ENCODE measurements at regions of chr11 and their contacts with region 1.

Region 1: GRCh38 chr11:44095506-44096394 is at the start of gene EXT2:
- DNase-seq: peak; percentile 49
- ATAC-seq: peak; percentile 95
- H3K4me3 ChIP-seq: peak within 1 kb of the TSS; percentile 81 to 89
- H3K27ac ChIP-seq: peak within 1 kb of the TSS; percentile 64
- H3K4me1 ChIP-seq: peaks cover 3 to 19% of the 10 kb centered on the region in 2 experiments; a peak in 2 of 4 replicates
- H3K27me3 ChIP-seq: no peaks in the 10 kb centered on the region
- CTCF ChIP-seq: peak; percentile 49 to 83 (median 77); a peak in 5 of 6 replicates
- POLR2A ChIP-seq: peak; percentile 24
- RAD21 ChIP-seq: no peak
- total RNA-seq, gene EXT2: 42.8 TPM

Region 2: DNA sequence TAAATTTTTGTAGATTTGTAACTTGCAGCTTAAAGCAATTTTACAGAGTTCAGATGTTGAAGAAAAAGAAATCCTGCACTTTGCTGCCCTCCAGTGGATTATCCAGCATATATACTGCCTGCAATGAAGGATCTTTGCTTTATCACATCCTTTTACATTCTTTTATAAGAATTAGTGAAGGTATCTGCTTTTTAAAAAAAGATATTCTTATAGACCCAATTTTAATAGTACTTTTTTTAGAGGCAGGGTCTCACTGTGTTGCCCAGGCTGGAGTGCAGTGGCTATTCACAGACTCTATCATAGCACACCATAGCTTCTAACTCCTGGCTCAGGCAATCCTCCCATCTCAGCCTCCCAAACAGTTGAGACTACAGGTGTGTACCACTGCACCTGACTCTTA is 676.3 kb before region 1 on chr11:
- CTCF ChIA-PET with region 1: no interaction called
- POLR2A ChIA-PET with region 1: no interaction called
- RAD21 ChIA-PET with region 1: no interaction called
- intact Hi-C with region 1: no loop called
- DNase-seq: peak; percentile 2
- ATAC-seq: peak; percentile 72; the same call in 1 of the 2 replicates
- H3K4me3 ChIP-seq: no peak overlapping the region
- H3K27ac ChIP-seq: no peak overlapping the region
- H3K4me1 ChIP-seq: no peaks in the 10 kb centered on the region
- H3K27me3 ChIP-seq: no peaks in the 10 kb centered on the region
- CTCF ChIP-seq: peak; percentile 10 to 77 (median 64); a peak in 4 of 6 replicates
- POLR2A ChIP-seq: no peak
- RAD21 ChIP-seq: peak; percentile 48

Region 3: DNA sequence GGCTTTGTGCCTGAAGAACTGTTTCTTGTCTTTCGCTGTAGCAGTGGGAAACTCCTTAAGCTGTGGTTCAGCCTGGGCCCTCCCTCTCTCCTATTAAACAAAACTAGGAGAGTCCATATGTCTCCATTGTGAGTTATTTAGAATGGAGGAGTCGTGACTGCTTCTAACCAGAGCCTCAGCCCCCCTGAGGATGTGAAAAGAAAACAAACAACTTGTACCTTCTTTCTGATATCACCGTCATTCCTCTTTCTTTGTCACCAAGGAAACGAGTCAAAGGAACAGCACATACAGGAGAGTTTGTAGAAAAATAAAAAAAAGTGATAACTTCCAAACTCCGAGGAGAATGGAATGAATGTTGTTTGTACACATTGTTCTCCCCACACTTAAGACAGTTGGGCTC is 11.8 kb before region 1 on chr11:
- CTCF ChIA-PET with region 1: interaction called, 17 read pairs
- POLR2A ChIA-PET with region 1: no interaction called
- RAD21 ChIA-PET with region 1: no interaction called
- intact Hi-C with region 1: no loop called
- DNase-seq: no peak
- ATAC-seq: no peak
- H3K4me3 ChIP-seq: no peak overlapping the region
- H3K27ac ChIP-seq: no peak overlapping the region
- H3K4me1 ChIP-seq: no peaks in the 10 kb centered on the region
- H3K27me3 ChIP-seq: no peaks in the 10 kb centered on the region
- CTCF ChIP-seq: no peak
- POLR2A ChIP-seq: no peak
- RAD21 ChIP-seq: no peak

Region 4: DNA sequence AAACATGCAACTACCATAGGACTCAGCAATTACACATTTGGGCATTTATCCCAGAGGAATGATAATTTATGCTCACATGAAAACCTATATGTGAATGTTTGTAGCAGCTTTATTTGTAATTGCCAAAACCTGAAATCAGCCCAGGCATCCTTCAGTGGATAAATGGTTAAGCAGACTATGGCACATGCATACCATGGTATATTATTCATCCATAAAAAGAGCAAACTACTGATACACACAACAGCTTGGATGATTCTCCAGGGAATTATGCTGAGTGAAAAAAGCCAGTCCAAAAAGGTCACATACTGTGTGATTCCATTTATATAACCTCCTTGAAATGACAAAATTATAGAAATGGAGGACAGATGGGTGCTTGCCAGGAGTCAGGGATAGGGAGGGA is 127.5 kb after region 1 on chr11:
- CTCF ChIA-PET with region 1: no interaction called
- POLR2A ChIA-PET with region 1: no interaction called
- RAD21 ChIA-PET with region 1: no interaction called
- intact Hi-C with region 1: no loop called
- DNase-seq: no peak
- ATAC-seq: no peak
- H3K4me3 ChIP-seq: no peak overlapping the region
- H3K27ac ChIP-seq: no peak overlapping the region
- H3K4me1 ChIP-seq: no peaks in the 10 kb centered on the region
- H3K27me3 ChIP-seq: no peaks in the 10 kb centered on the region
- CTCF ChIP-seq: no peak
- POLR2A ChIP-seq: no peak
- RAD21 ChIP-seq: no peak